HEK293 (cell line): ENCODE measurements at regions of chr1 and their contacts with region 1.

Region 1: GRCh38 chr1:244826712-244827111 is 8.7 kb upstream of the COX20 start:
- H3K4me3 ChIP-seq: no peak overlapping the region
- H3K27ac ChIP-seq: no peak overlapping the region
- H3K4me1 ChIP-seq: no peaks in the 10 kb centered on the region
- CTCF ChIP-seq: no peak

Region 2: DNA sequence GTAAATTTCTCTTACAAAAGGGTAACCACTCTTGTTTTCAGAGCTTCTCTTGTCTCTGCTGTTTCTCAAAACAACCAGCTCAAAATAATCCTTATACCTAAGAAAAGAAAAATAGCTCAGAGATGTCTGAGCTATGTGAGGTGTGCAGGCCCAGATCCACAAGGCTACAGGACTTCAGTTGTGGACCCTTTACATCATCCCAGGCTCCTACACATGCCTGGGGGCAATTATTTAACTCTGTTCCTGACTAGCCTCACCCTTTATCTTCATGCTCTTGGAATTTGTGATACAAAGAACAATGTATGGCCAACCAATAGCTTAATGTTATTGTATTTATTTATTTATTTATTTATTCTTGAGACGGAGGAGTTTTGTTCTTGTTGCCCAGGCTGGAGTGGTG is 92.5 kb before region 1 on chr1:
- CTCF ChIA-PET with region 1: interaction called, 10 read pairs
- POLR2A ChIA-PET with region 1: no interaction called
- H3K4me3 ChIP-seq: no peak overlapping the region
- H3K27ac ChIP-seq: no peak overlapping the region
- H3K4me1 ChIP-seq: no peaks in the 10 kb centered on the region
- CTCF ChIP-seq: no peak

Region 3: GRCh38 chr1:245000872-245001188 is 174.1 kb after region 1 on chr1:
- CTCF ChIA-PET with region 1: no interaction called
- POLR2A ChIA-PET with region 1: no interaction called
- H3K4me3 ChIP-seq: no peak overlapping the region
- H3K27ac ChIP-seq: no peak overlapping the region
- H3K4me1 ChIP-seq: no peaks in the 10 kb centered on the region
- CTCF ChIP-seq: no peak

Region 4: DNA sequence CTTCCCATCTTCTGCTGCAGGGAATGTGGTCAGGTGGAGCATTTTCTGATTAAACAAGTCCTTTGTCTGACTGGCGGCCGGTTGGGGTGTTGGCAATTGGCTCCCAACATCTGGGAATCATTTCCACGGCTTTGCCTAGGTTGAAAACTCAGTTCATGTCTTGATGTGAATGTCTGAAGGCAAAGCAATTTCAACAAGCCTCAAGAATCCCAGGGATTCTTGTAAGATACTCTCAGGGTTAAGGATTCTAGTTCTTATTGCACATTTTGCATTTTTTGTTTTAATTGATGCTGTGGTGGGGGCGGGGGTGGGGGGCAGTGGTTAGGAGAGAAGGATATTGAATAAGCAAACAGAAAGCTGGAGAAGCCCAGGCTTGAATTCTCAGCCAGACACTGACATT is 602.0 kb after region 1 on chr1:
- CTCF ChIA-PET with region 1: no interaction called
- POLR2A ChIA-PET with region 1: no interaction called
- H3K4me3 ChIP-seq: no peak overlapping the region
- H3K27ac ChIP-seq: no peak overlapping the region
- H3K4me1 ChIP-seq: no peaks in the 10 kb centered on the region
- CTCF ChIP-seq: no peak